Right ventricle myocardium superior (tissue), 1 donor: ENCODE measurements at regions of chr21 and their contacts with region 1.

Region 1: DNA sequence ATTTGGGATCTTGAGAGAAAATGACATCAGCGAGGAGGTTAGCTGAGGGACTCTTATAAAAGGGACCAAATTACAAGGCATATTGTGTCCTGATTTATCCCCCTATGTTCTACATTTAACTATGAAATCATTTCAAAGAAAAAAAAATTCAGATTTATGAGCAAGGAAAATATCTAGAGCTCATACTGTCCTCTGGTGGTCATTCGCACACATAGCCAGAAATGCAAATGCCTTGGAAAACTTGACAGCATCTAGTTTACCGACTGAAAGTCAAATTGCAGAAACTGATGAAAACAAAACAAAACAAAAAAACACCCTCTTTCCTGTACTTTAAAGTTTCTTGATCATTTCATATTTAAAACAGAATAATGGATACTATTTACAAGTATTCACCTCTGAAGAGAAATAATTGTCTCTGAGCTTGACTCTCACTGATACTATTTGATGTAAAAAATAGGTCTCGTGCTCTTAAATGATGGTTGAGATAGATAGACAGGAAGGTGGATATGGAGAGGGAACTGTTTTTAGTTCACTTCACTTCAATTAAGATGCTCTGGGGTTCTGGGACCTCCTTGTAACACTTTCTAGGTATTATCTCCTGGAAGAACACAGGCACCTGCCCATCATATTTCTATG is 253.8 kb downstream of the PCP4 start:
- DNase-seq: no peak
- ATAC-seq: no peak

Region 2: DNA sequence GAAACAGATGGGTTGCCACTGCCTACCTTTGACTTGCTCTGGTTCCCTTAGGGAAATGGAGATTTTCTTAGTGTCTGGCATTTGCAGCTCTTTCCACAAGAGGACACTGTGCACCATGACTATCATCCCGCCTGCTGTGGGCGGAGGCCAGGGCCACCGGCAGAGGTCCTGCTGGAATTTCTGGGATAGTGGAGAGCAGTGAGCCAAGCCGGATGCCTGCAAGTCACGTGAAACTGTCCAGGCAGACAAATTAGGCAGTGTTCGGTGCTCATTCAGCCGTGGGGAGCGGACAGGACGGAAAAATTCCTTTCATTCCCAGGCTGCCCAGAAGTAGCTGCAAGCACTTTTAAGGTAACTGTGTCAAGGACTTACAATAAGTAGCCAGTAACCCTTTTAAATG is 332.7 kb before region 1 on chr21:
- intact Hi-C with region 1: loop called (anchors 2 kb)
- DNase-seq: peak; percentile 83
- ATAC-seq: peak; percentile 99

Region 3: GRCh38 chr21:39867198-39867650 is 253.8 kb before region 1 on chr21 and contains the start of gene PCP4:
- intact Hi-C with region 1: loop called (anchors 5 kb)
- DNase-seq: no peak
- ATAC-seq: peak; percentile 68
- total RNA-seq, gene PCP4: 3.0 TPM

Region 4: DNA sequence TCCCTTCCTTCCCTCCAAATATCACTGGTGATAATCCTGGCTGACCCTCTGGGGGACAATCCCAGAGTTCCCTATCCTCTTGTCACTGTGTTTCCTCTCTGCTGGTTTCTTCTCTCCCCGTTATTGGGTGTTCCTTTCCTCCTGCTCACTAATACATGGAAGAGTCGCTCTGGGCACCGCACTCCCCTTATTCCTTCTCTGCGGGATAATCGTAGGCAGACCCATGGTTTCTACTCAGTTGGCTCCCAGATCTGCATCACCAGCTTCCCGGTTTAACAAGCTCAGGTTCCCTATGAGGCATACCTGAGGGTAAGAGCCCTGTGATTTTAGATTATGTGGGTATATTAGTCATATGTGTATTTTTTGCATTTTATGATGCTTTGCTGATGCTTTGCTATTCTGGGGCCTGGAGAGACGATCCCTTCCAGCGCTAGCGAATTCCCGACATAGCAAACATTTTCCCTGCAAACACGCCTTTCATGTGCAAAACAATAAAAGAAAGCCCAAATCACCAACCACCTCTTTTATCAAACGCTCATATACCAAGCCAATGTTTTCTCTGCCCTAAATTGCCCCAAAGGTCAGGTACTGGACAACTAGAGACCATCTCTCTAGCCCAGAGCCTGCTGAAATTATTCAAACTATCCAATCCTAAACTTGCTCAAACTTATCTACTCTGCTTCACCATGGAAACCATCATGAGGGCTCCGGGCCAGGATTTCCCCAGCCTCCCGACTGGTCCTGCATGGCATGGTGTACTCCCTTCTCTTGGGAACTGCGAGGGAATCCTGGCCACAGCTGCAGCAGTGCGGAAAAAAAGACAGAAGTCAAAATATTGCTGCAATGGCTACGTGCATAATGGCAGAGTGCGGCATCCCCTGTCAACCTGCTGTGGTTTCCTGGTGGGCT is 169.6 kb before region 1 on chr21:
- intact Hi-C with region 1: no loop called
- DNase-seq: no peak
- ATAC-seq: no peak

Region 5: GRCh38 chr21:40043431-40043830 is 77.6 kb before region 1 on chr21:
- intact Hi-C with region 1: loop called (anchors 2 kb)
- DNase-seq: no peak
- ATAC-seq: peak; percentile 59

Region 6: DNA sequence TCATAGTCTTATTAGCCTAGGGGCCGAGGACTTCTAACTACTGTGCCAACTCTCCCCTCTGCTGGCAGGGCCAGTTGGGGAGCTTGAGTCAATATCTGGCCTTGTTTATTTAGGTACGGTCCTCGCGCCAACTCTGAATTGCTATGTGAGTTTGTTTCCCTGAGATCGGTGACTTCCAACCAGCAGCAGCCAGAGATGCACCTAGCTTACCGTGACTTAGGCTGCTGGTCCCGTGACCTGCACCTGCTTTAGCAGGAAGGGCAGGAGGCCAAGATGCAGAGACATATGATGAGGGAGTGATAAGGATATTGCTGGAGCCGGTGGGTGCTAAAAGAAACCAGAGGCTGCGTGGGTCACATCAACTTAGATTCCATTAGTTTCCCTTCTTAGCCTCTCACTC is 197.4 kb after region 1 on chr21:
- intact Hi-C with region 1: no loop called
- DNase-seq: no peak
- ATAC-seq: no peak